HepG2 (cell line): ENCODE measurements at regions of chr6 and their contacts with region 1.

Region 1: DNA sequence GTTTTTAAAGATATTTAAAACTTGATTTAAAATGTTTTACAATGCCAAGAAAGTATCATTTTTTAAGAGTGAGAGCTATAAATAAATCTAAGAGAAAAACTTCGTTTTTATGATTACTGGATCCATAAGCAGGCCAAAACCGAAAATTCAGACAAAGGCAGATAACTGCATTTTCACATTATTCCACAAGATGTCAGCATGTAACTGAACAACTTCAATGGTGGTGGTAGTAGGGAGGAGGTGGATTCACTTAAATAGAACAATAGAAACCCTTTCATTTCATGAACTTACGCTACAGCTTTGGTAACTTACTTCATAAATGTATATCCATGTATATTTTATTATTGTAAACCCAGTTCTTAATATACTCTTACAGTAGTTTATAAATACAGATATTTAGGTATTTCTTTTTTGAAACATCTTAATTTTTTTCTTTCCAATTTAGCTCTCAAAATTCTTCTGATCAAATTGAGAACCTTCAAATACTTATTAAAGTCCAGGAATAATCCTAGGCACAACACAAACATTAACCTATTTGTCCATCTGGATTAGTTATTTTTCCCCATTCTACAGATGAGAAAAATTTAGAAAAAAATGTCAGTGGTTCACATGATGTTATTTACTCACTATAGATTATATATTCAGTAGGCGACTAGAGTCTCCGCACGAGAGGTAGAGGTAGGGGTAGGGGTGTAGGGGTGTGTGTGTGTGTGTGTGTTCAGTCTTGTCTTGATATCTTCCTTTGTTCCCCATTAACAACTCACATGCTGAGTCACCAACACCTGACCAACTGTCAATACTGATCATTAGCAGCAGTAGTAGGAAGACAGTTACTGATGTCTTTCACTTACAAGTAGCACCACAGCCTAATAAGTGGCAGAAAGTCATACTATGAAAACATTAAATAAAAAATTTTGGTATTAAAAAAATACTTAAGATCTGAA is 111.5 kb downstream of the ARHGAP18 start:
- DNase-seq: peak; percentile 67
- ATAC-seq: peak; percentile 47
- H3K4me3 ChIP-seq: no peak overlapping the region
- H3K27ac ChIP-seq: no peak overlapping the region
- H3K4me1 ChIP-seq: peaks cover 26% of the 10 kb centered on the region
- H3K27me3 ChIP-seq: no peaks in the 10 kb centered on the region
- CTCF ChIP-seq: peak; percentile 79
- EP300 ChIP-seq: no peak
- POLR2A ChIP-seq: no peak
- RAD21 ChIP-seq: peak; percentile 83

Region 2: GRCh38 chr6:129667621-129668020 is 69.1 kb after region 1 on chr6:
- CTCF ChIA-PET with region 1: no interaction called
- POLR2A ChIA-PET with region 1: no interaction called
- in situ Hi-C with region 1: no loop called
- intact Hi-C with region 1: loop called (anchors 2 kb)
- DNase-seq: no peak
- ATAC-seq: no peak
- H3K4me3 ChIP-seq: no peak overlapping the region
- H3K27ac ChIP-seq: no peak overlapping the region
- H3K4me1 ChIP-seq: peaks cover 73% of the 10 kb centered on the region
- H3K27me3 ChIP-seq: no peaks in the 10 kb centered on the region
- CTCF ChIP-seq: no peak
- EP300 ChIP-seq: no peak
- POLR2A ChIP-seq: no peak
- RAD21 ChIP-seq: no peak

Region 3: GRCh38 chr6:129774697-129775447 is 176.4 kb after region 1 on chr6:
- CTCF ChIA-PET with region 1: interaction called, 15 read pairs
- POLR2A ChIA-PET with region 1: no interaction called
- in situ Hi-C with region 1: no loop called
- intact Hi-C with region 1: loop called (anchors 1 kb)
- DNase-seq: peak; percentile 85
- ATAC-seq: peak; percentile 98
- H3K4me3 ChIP-seq: peak overlapping the region; percentile 35 to 71 (median 40); a peak in 4 of 6 replicates
- H3K27ac ChIP-seq: no peak overlapping the region
- H3K4me1 ChIP-seq: peaks cover 6% of the 10 kb centered on the region
- H3K27me3 ChIP-seq: no peaks in the 10 kb centered on the region
- CTCF ChIP-seq: peak; percentile 97
- EP300 ChIP-seq: peak in 1 of 2 experiments; percentile 15; a peak in 1 of 4 replicates
- POLR2A ChIP-seq: no peak
- RAD21 ChIP-seq: peak; percentile 75

Region 4: DNA sequence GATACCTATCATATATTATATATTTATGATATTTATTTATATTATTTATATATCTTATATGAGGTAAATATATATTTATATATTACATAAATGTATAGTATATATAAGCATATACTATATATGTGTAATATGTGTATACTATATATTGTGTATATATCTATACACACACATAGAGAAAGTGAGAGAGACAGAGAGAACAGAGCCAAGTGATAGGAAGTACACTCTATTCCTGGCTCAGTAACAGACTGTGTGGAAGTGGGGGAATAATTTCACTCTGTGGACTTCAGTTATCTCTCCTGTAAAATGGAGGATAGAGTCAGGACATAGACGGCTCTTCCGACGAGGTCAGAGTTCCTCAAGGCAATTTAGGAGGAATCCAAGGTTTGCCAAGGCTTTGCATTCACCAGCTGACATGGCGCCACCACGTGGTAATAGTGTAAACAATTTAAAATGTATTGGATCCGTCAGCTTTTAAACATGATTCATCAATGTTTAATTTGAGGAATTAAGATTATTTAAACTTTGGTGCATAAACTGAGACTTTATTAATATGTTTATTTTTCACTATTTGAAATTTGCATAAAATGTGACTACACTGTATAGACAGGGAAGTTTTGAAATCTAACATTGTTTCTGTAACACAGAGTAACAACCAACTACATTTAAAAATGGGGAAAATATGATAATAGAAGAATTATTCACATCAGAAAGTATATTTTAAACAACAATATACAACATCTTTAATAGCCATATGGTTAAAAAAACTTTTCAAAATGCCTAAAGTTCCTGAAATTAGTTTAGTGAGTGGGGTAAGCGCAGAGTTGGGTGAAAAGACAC is 338.0 kb after region 1 on chr6:
- CTCF ChIA-PET with region 1: no interaction called
- POLR2A ChIA-PET with region 1: no interaction called
- in situ Hi-C with region 1: no loop called
- intact Hi-C with region 1: loop called (anchors 10 kb)
- DNase-seq: peak; percentile 49
- ATAC-seq: peak; percentile 77
- H3K4me3 ChIP-seq: no peak overlapping the region
- H3K27ac ChIP-seq: no peak overlapping the region
- H3K4me1 ChIP-seq: no peaks in the 10 kb centered on the region
- H3K27me3 ChIP-seq: peaks cover 0 to 8% of the 10 kb centered on the region in 2 experiments; a peak in 2 of 5 replicates
- CTCF ChIP-seq: peak; percentile 75
- EP300 ChIP-seq: no peak
- POLR2A ChIP-seq: no peak
- RAD21 ChIP-seq: no peak